Aorta (tissue), 5 donors: ENCODE measurements at regions of chr4 and their contacts with region 1.

Region 1: GRCh38 chr4:106818764-106819163 is 217.3 kb downstream of the DKK2 start:
- DNase-seq: no peak
- ATAC-seq: no peak
- H3K4me3 ChIP-seq: no peak overlapping the region
- H3K27ac ChIP-seq: no peak overlapping the region
- H3K4me1 ChIP-seq: no peaks in the 10 kb centered on the region
- H3K27me3 ChIP-seq: no peaks in the 10 kb centered on the region

Region 2: GRCh38 chr4:106898621-106899230 is 80.0 kb after region 1 on chr4:
- intact Hi-C with region 1: loop called in 1 of 2 experiments (anchors 5 kb)
- DNase-seq: no peak
- ATAC-seq: peak; percentile 66
- H3K4me3 ChIP-seq: no peak overlapping the region
- H3K27ac ChIP-seq: no peak overlapping the region
- H3K4me1 ChIP-seq: no peaks in the 10 kb centered on the region
- H3K27me3 ChIP-seq: peaks cover 0 to 2% of the 10 kb centered on the region in 2 donors